Right cardiac atrium (tissue), 5 donors: ENCODE measurements at regions of chr11 and their contacts with region 1.

Region 1: DNA sequence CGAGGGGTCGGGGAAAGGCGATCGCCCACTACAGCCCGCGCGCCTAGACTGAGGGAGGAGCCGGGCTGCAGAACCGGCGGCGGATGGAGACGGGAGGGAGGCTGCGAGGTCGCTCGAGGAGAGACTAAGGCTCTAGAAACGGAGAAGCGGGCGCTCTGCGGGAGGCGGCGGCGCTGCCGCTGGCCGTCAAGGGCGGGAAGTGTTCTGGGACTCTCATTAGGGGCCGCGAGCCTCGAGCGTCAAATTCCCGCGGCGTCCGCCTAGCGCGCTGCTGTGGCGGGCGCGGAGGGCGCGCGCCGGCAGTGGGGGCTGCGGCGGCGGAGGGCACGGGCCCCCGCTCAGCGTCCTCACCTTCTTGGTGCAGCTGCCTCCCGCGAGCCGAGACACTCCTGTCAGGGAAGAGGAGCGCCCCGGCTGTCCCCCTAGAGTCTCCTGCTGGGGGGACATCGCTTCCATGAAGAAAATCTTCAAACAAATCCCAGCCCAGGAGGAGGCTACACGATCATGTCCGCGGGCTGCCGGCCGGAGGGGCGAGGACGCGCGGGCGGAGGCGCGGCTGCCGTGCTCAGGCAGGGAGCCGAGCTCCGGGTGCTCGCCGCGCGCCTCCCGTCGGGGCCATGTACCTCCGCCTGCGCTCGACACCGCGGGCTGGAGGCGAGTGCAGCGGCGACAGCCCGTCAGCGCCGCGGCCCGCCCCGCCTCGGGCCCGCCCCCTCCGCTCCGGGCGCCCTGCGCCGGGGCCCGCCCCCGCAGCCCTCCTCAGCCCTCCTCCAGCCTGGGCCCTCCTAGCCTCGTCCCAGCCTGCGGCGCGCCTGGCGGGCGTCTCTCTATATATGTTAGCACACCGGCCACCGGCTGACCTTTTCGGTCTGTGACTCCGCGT is at the start of gene ARHGAP20:
- DNase-seq: peak; percentile 74 to 88 (median 85)
- ATAC-seq: peak; percentile 97
- H3K4me3 ChIP-seq: peak within 1 kb of the TSS; percentile 64
- H3K27ac ChIP-seq: peak within 1 kb of the TSS; percentile 4
- H3K4me1 ChIP-seq: no peaks in the 10 kb centered on the region
- H3K27me3 ChIP-seq: no peaks in the 10 kb centered on the region
- total RNA-seq, gene ARHGAP20: 0.34 to 0.78 (median 0.42) TPM

Region 2: DNA sequence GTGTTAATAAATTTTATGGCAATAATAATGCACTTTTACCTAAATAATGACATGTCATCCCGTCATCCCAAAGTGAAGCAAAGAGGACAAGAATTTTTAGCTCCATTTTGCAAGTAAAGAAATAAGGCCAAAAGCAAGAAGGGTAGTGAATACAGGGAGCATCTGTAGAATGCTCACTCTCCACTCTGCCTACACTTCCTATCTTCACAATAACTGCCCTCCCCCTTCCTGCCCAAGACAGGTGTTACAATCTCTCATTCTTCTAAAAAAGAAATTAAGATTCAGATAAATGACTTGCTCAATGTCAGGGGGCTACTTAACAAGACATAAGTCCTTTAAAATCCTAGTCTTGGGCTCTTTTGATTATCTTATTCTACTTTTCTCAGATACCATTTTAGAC is 424.5 kb before region 1 on chr11:
- intact Hi-C with region 1: no loop called
- DNase-seq: no peak
- ATAC-seq: no peak
- H3K4me3 ChIP-seq: no peak overlapping the region
- H3K27ac ChIP-seq: no peak overlapping the region
- H3K4me1 ChIP-seq: peaks cover 6% of the 10 kb centered on the region
- H3K27me3 ChIP-seq: no peaks in the 10 kb centered on the region

Region 3: DNA sequence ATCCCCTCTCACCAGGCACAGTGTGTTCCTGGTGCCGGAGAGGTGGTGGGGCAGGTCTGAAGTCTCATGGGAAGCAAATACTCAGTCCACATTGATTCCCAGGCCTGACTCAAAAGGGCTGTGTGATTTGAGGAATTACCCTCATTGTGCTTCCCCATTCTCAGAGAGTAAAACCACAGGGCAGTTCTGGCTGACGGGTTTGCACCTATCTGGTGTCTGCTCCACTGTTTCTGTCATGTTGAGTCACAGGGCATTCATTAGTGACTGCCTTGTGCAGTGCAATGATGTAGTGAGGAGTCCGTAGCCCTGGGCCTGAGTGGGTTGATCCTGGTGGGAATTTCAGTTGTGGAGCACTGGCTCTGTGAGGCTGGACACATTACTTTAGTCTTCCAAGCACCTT is 85.4 kb after region 1 on chr11:
- intact Hi-C with region 1: no loop called
- DNase-seq: peak in 1 of 3 donors; percentile 32
- ATAC-seq: peak in 1 of 2 donors; percentile 14
- H3K4me3 ChIP-seq: no peak overlapping the region
- H3K27ac ChIP-seq: no peak overlapping the region
- H3K4me1 ChIP-seq: peaks cover 2% of the 10 kb centered on the region
- H3K27me3 ChIP-seq: no peaks in the 10 kb centered on the region

Region 4: GRCh38 chr11:110866091-110866490 is 154.1 kb after region 1 on chr11:
- intact Hi-C with region 1: loop called in 1 of 4 experiments (anchors 10 kb)
- DNase-seq: no peak
- ATAC-seq: no peak
- H3K4me3 ChIP-seq: no peak overlapping the region
- H3K27ac ChIP-seq: no peak overlapping the region
- H3K4me1 ChIP-seq: no peaks in the 10 kb centered on the region
- H3K27me3 ChIP-seq: no peaks in the 10 kb centered on the region

Region 5: GRCh38 chr11:111063726-111064517 is 351.9 kb after region 1 on chr11:
- intact Hi-C with region 1: no loop called
- DNase-seq: no peak
- ATAC-seq: no peak
- H3K4me3 ChIP-seq: no peak overlapping the region
- H3K27ac ChIP-seq: no peak overlapping the region
- H3K4me1 ChIP-seq: no peaks in the 10 kb centered on the region
- H3K27me3 ChIP-seq: no peaks in the 10 kb centered on the region